MCF 10A (cell line): ENCODE measurements at regions of chr9 and their contacts with region 1.

Region 1: GRCh38 chr9:110427497-110428104 is 89.9 kb upstream of the TXNDC8 start:
- DNase-seq: peak; percentile 49
- H3K4me3 Mint-ChIP-seq: no peak overlapping the region
- H3K27ac Mint-ChIP-seq: no peak overlapping the region
- H3K4me1 Mint-ChIP-seq: peaks cover 6% of the 10 kb centered on the region
- H3K27me3 Mint-ChIP-seq: no peaks in the 10 kb centered on the region
- CTCF ChIP-seq: peak; percentile 48

Region 2: GRCh38 chr9:110340314-110340713 is 87.3 kb before region 1 on chr9:
- CTCF ChIA-PET with region 1: interaction called, 3 read pairs
- POLR2A ChIA-PET with region 1: no interaction called
- intact Hi-C with region 1: loop called (anchors 2 kb)
- DNase-seq: peak; percentile 24
- H3K4me3 Mint-ChIP-seq: no peak overlapping the region
- H3K27ac Mint-ChIP-seq: no peak overlapping the region
- H3K4me1 Mint-ChIP-seq: no peaks in the 10 kb centered on the region
- H3K27me3 Mint-ChIP-seq: no peaks in the 10 kb centered on the region
- CTCF ChIP-seq: peak; percentile 45

Region 3: GRCh38 chr9:110440172-110440571 is 12.6 kb after region 1 on chr9:
- CTCF ChIA-PET with region 1: interaction called, 13 read pairs
- POLR2A ChIA-PET with region 1: interaction called, 3 read pairs
- intact Hi-C with region 1: no loop called
- DNase-seq: peak; percentile 67
- H3K4me3 Mint-ChIP-seq: peak overlapping the region; percentile 1
- H3K27ac Mint-ChIP-seq: peak overlapping the region; percentile 55
- H3K4me1 Mint-ChIP-seq: peaks cover 32% of the 10 kb centered on the region
- H3K27me3 Mint-ChIP-seq: no peaks in the 10 kb centered on the region
- CTCF ChIP-seq: no peak

Region 4: DNA sequence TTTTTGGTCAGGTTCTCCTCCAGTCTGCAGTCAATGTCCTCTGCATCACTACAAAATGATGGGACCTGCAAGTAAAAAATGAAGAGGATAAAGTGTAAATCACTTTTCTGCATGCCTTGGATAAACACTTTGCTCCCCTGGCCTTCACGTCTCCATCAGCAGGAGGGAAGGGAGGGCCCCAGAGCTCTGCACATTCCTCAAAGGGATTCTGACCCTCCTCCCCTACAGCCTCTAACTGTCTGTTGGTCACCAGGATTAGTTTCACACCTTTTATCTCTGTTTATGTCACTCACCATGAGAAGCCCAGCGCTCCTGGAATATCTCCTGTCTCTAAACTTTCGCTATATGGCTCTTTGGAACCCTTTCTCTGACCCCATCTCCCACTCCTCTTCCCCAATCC is 48.6 kb after region 1 on chr9:
- CTCF ChIA-PET with region 1: no interaction called
- POLR2A ChIA-PET with region 1: no interaction called
- intact Hi-C with region 1: no loop called
- DNase-seq: no peak
- H3K4me3 Mint-ChIP-seq: no peak overlapping the region
- H3K27ac Mint-ChIP-seq: no peak overlapping the region
- H3K4me1 Mint-ChIP-seq: no peaks in the 10 kb centered on the region
- H3K27me3 Mint-ChIP-seq: no peaks in the 10 kb centered on the region
- CTCF ChIP-seq: no peak

Region 5: GRCh38 chr9:110579034-110579861 is 151.6 kb after region 1 on chr9 and contains the start of gene SVEP1:
- CTCF ChIA-PET with region 1: no interaction called
- POLR2A ChIA-PET with region 1: no interaction called
- intact Hi-C with region 1: loop called (anchors 1 kb)
- DNase-seq: peak; percentile 67
- H3K4me3 Mint-ChIP-seq: peak within 1 kb of the TSS; percentile 98
- H3K27ac Mint-ChIP-seq: peak within 1 kb of the TSS; percentile 37
- H3K4me1 Mint-ChIP-seq: peaks cover 43% of the 10 kb centered on the region
- H3K27me3 Mint-ChIP-seq: no peaks in the 10 kb centered on the region
- CTCF ChIP-seq: no peak
- total RNA-seq, gene SVEP1: 9.9 and 21.9 TPM in 2 replicates

Region 6: DNA sequence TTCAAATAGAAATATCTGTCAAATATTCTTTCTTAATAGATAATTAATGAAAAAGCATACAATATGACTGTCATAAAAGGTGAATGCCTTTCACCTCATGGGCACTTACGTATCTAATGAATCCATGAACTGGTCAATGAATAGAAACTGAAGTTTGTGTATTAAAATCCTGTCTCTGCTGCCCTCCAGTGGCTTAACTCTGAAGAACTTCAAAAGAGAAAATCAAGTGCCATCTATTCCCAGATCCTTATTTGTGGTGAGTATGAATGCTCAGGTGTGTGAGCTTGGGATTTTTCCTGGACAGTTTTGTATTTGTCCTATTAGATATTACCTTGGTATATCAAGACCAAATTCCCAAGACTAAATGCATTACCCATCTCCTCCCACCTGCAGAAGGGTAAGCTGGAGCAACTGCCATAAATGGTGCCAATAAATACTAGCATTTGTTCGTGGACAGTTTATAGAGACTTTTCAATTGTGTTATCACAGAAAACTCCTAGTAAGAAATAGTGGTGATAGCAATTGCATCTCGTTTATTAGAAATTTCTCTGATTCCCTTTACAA is 195.9 kb after region 1 on chr9:
- CTCF ChIA-PET with region 1: interaction called, 13 read pairs
- POLR2A ChIA-PET with region 1: interaction called, 3 read pairs
- intact Hi-C with region 1: loop called (anchors 2 kb)
- DNase-seq: peak; percentile 77
- H3K4me3 Mint-ChIP-seq: no peak overlapping the region
- H3K27ac Mint-ChIP-seq: no peak overlapping the region
- H3K4me1 Mint-ChIP-seq: no peaks in the 10 kb centered on the region
- H3K27me3 Mint-ChIP-seq: no peaks in the 10 kb centered on the region
- CTCF ChIP-seq: peak; percentile 60